Activated naive CD4-positive, alpha-beta T cell treated with anti-CD3 and anti-CD28 coated beads for 36 hours (primary cell): ENCODE measurements at regions of chr16 and their contacts with region 1.

Region 1: DNA sequence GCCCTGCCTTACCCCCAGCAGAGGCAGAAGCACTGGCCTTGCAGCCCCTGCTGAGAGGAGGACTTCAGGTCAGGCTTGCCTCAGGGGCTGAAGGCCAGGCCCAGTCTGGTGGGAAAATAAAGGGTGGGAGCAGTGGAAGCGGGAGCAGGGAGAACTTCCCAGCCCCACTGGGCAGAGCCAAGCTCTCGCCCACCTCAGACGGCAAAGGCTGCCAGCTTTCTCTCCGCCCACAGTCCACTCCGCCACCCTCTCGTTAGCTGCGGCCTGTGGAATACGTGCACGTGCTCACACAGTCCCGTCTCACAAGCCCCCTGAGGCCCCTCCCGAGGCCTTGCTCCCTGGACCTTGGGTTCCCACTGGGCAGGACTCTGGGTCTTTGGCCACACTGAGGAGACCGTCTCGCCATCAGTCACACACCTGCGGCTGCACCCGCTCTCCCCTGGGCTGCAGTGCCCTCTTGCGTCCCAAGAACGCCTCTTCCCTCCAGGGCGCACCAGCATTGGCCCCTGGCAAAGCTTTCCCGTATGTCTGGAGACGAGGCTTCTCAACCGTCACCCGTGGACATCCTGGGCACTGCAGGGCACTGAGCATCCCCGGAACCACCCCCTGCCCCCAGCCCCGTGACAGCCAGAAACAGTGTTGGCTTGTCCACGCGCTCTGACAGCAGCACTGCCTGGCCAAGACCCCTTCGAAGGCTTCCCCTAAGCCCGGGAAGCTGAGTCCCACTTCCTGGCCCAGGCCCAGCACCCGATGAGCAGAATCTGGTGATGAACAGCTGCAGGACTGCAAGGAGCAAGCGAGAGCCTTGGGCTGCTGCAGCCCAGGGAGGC is 8.3 kb downstream of the MRPL28 start:
- DNase-seq: peak; percentile 85
- H3K4me3 Mint-ChIP-seq: no peak overlapping the region
- H3K27ac Mint-ChIP-seq: no peak overlapping the region
- H3K4me1 Mint-ChIP-seq: peaks cover 4% of the 10 kb centered on the region
- H3K27me3 Mint-ChIP-seq: no peaks in the 10 kb centered on the region

Region 2: GRCh38 chr16:106623-107324 is 255.3 kb before region 1 on chr16:
- CTCF ChIA-PET with region 1: interaction called, 14 read pairs
- intact Hi-C with region 1: loop called (anchors 1 kb)
- DNase-seq: peak; percentile 60
- H3K4me3 Mint-ChIP-seq: no peak overlapping the region
- H3K27ac Mint-ChIP-seq: no peak overlapping the region
- H3K4me1 Mint-ChIP-seq: no peaks in the 10 kb centered on the region
- H3K27me3 Mint-ChIP-seq: no peaks in the 10 kb centered on the region

Region 3: GRCh38 chr16:117379-118365 is 244.4 kb before region 1 on chr16:
- CTCF ChIA-PET with region 1: interaction called, 17 read pairs
- intact Hi-C with region 1: no loop called
- DNase-seq: peak; percentile 58
- H3K4me3 Mint-ChIP-seq: no peak overlapping the region
- H3K27ac Mint-ChIP-seq: no peak overlapping the region
- H3K4me1 Mint-ChIP-seq: peaks cover 6% of the 10 kb centered on the region
- H3K27me3 Mint-ChIP-seq: no peaks in the 10 kb centered on the region

Region 4: GRCh38 chr16:228818-229730 is 133.0 kb before region 1 on chr16 and contains the start of gene LUC7L:
- CTCF ChIA-PET with region 1: interaction called, 13 read pairs
- intact Hi-C with region 1: no loop called
- DNase-seq: peak; percentile 88
- H3K4me3 Mint-ChIP-seq: peak within 1 kb of the TSS; percentile 81
- H3K27ac Mint-ChIP-seq: peak within 1 kb of the TSS; percentile 88
- H3K4me1 Mint-ChIP-seq: peaks cover 33% of the 10 kb centered on the region
- H3K27me3 Mint-ChIP-seq: no peaks in the 10 kb centered on the region
- total RNA-seq, gene LUC7L: 58.4 to 59.1 TPM